MCF 10A (cell line): ENCODE measurements at regions of chr20 and their contacts with region 1.

Region 1: DNA sequence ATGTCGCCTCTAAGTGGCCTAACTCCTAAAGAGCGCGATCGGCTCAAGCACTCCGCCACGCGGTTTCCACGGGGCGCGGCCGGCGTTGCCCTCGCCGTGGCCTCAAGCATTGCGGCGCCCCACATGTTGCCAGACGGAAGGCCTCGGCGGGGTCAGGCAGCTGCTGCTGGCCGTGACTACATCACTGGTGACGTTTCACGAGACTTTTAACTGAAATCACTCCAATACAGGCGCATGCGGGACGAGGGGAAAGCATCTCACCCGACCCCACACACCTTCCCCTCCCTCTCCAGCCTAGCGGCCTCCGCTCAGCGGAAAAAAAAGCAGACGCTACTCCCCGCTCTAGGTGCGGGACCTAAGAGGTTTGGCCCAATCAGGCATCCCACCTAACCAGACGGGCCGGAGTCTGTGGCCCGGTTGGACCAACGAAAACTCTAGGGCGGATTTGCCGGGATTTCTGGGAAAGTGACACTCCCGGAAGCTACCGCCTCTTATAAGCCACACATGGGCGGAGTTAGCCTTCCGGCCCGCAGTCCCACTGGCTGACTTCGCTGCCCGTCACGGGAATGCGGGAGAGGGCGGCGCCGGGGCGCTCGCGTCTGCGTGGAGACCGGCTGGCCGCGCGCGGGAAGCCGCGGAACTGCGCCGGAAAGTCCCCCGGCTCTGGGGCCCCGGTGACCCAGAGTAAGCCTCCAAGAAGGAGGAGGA is at the start of gene NXT1:
- DNase-seq: peak; percentile 99
- H3K4me3 Mint-ChIP-seq: peak within 1 kb of the TSS; percentile 87
- H3K27ac Mint-ChIP-seq: peak within 1 kb of the TSS; percentile 97
- H3K4me1 Mint-ChIP-seq: peaks cover 17% of the 10 kb centered on the region
- H3K27me3 Mint-ChIP-seq: no peaks in the 10 kb centered on the region
- CTCF ChIP-seq: no peak
- total RNA-seq, gene NXT1: 32.2 and 40.1 TPM in 2 replicates

Region 2: DNA sequence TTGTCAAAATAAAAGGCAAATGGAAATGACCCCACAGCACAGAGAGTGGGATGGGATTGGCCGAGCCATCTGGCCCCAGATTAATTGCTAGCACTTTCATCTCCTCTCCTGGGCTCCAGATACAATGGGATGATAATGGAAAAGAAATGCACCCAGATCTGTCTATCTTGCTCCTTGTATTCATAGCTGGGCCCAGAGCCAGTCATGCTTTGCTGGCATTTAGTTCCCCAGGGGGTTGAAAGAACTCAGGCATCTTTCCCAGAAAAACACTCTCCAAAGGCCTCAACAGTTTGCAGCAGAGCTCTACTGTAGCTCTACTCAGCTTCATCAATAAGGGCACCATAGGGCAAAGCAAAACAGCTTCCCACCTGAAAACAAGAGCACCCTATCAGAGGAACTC is 650.0 kb before region 1 on chr20:
- CTCF ChIA-PET with region 1: interaction called, 233 read pairs
- POLR2A ChIA-PET with region 1: interaction called, 13 read pairs
- intact Hi-C with region 1: no loop called
- DNase-seq: peak; percentile 57
- H3K4me3 Mint-ChIP-seq: no peak overlapping the region
- H3K27ac Mint-ChIP-seq: no peak overlapping the region
- H3K4me1 Mint-ChIP-seq: peaks cover 20% of the 10 kb centered on the region
- H3K27me3 Mint-ChIP-seq: no peaks in the 10 kb centered on the region
- CTCF ChIP-seq: no peak

Region 3: GRCh38 chr20:23099791-23100698 is 250.3 kb before region 1 on chr20:
- CTCF ChIA-PET with region 1: no interaction called
- POLR2A ChIA-PET with region 1: interaction called, 12 read pairs
- intact Hi-C with region 1: no loop called
- DNase-seq: peak; percentile 81
- H3K4me3 Mint-ChIP-seq: peak overlapping the region; percentile 12
- H3K27ac Mint-ChIP-seq: no peak overlapping the region
- H3K4me1 Mint-ChIP-seq: peaks cover 49% of the 10 kb centered on the region
- H3K27me3 Mint-ChIP-seq: no peaks in the 10 kb centered on the region
- CTCF ChIP-seq: no peak

Region 4: DNA sequence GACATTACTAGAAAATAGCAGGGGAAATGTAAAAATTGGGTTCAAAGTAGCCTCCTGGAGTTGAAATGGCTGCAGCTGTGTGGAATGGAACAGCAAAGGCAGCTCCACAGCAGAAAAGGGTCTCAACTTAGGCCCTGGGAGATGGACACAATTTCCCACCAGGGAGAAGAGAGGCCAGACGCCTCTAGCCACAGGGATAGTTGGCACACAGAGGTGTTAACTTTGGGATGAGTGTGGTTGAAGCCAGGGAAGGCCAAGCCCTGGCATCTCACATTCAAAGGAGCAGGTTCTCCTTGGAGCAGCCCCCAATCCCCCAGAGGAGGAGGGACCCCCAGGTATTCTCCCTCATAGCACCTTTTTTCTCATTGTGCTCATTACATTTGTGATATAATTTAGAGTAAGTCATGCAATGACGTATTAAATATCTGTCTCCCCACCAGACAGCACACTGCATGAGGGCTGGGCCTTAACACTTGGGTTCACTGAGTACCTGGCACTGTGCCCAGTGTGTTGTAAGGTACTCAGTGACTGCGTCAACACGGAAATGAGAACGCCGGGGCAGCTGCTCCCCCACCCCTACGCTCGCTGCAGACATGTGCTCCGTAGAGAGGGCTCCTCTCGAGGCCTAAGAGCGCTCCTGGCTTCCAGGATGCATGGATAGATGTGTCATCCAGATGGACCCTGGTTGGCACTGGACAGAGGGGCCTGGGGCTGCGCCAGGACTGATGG is 188.2 kb before region 1 on chr20:
- CTCF ChIA-PET with region 1: interaction called, 5 read pairs
- POLR2A ChIA-PET with region 1: interaction called, 14 read pairs
- intact Hi-C with region 1: no loop called
- DNase-seq: peak; percentile 100
- H3K4me3 Mint-ChIP-seq: no peak overlapping the region
- H3K27ac Mint-ChIP-seq: peak overlapping the region; percentile 92
- H3K4me1 Mint-ChIP-seq: peaks cover 64% of the 10 kb centered on the region
- H3K27me3 Mint-ChIP-seq: no peaks in the 10 kb centered on the region
- CTCF ChIP-seq: no peak

Region 5: DNA sequence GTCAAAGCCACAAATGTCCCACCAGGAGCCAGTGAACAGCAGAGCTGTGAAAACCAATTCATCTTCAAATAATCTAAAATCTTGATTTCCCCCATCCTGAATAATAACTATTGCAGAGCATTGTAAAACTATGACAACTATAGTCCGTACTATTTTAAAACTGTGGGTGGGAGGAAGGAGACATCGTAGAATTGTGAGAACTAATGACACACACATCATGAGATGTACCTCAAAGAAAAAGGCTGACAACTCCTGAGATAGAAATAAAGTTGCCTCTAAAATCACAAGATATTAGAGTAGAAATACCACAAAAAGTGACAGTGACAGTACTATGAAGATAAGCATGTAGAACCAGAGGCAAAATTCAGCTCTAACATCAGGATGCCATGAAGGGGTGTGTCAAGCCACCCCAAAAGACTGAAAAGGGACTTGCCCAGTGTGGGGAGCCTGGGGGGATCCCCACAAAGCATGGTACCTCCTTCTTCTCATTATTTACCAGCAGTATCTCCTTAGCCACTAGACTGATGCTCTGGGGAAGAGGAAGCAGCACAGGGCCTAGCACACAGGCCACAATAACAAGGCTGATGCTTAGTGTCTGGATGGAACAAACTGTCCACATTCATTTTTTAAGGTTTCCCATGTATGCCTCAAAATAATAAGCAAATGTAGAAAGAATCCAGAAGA is 57.6 kb after region 1 on chr20:
- CTCF ChIA-PET with region 1: interaction called, 3 read pairs
- POLR2A ChIA-PET with region 1: interaction called, 35 read pairs
- intact Hi-C with region 1: no loop called
- DNase-seq: no peak
- H3K4me3 Mint-ChIP-seq: no peak overlapping the region
- H3K27ac Mint-ChIP-seq: no peak overlapping the region
- H3K4me1 Mint-ChIP-seq: peaks cover 25% of the 10 kb centered on the region
- H3K27me3 Mint-ChIP-seq: no peaks in the 10 kb centered on the region
- CTCF ChIP-seq: no peak

Region 6: DNA sequence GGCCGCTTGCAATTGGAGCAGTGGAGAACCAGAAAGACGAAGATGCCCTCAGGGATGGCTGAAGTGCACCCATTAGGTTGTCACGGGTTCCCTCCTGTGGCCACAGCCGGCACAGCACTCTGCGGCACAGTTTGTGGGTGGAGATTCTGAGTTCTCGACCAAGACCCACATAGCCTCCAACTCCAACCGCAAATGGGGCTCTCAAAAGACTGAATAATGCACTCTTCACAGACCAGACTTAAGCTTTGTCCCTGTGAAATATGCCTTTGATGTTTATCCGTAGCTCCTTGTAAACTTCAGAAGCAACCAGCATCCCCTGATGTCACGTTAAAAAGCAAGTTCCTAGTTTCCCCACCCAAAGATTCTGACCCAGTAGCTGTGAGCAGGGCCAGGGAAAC is 256.3 kb after region 1 on chr20:
- CTCF ChIA-PET with region 1: interaction called, 8 read pairs
- POLR2A ChIA-PET with region 1: interaction called, 10 read pairs
- intact Hi-C with region 1: no loop called
- DNase-seq: peak; percentile 86
- H3K4me3 Mint-ChIP-seq: no peak overlapping the region
- H3K27ac Mint-ChIP-seq: peak overlapping the region; percentile 58
- H3K4me1 Mint-ChIP-seq: no peaks in the 10 kb centered on the region
- H3K27me3 Mint-ChIP-seq: no peaks in the 10 kb centered on the region
- CTCF ChIP-seq: peak; percentile 90